IMR-90 (cell line): ENCODE measurements at regions of chr4 and their contacts with region 1.

Region 1: DNA sequence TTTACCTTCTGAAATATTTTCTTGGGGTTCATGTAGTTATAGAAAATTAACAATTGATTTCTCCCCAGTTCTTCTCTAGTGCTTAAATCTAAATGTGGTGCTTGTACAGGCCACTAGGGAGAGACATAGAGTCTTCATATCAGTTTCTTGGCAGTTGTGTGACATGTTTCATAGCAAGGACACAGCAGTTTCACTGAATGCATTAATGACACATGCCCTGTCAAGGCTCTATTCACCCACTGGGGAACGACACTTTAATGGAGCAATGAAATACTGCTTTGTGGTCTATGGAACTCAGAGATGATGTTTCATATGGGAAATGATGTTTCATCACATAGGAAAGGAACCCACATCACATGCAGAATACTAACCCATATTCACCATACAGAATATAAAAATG is 2.8 kb downstream of the VEGFC start:
- DNase-seq: peak; percentile 81
- ATAC-seq: no peak
- H3K4me3 ChIP-seq: peak overlapping the region; percentile 96; the same call in 1 of the 2 replicates
- H3K27ac ChIP-seq: no peak overlapping the region
- H3K4me1 ChIP-seq: peaks cover 25% of the 10 kb centered on the region
- H3K27me3 ChIP-seq: no peaks in the 10 kb centered on the region
- CTCF ChIP-seq: peak; percentile 62
- POLR2A ChIP-seq: no peak
- RAD21 ChIP-seq: peak; percentile 60

Region 2: DNA sequence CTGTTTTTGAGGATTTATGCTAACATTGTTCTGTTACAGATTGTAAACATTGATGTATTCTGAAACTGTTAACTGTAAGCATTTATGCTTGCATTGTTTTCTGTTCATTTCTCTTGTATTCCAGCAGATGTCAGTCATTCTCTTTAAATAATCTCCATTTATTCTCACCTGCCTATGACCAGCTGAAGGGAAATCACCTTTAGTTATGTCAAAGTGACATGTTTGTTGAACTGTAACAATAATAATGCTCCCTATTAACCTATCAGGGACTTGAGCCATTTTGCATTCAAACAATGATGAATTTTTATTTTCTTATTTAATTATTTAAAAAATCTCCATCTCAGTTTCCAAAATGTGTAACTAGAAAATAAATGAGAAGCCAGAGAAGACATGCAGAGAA is 412.2 kb before region 1 on chr4:
- CTCF ChIA-PET with region 1: interaction called, 3 read pairs
- POLR2A ChIA-PET with region 1: no interaction called
- dilution Hi-C with region 1: no loop called
- in situ Hi-C with region 1: loop called (anchors 25 kb)
- intact Hi-C with region 1: loop called (anchors 2 kb)
- DNase-seq: peak; percentile 43
- ATAC-seq: peak; percentile 53; the same call in 1 of the 2 replicates
- H3K4me3 ChIP-seq: no peak overlapping the region
- H3K27ac ChIP-seq: no peak overlapping the region
- H3K4me1 ChIP-seq: no peaks in the 10 kb centered on the region
- H3K27me3 ChIP-seq: no peaks in the 10 kb centered on the region
- CTCF ChIP-seq: peak; percentile 65
- POLR2A ChIP-seq: no peak
- RAD21 ChIP-seq: peak; percentile 82

Region 3: GRCh38 chr4:176753049-176753448 is 36.9 kb before region 1 on chr4:
- CTCF ChIA-PET with region 1: no interaction called
- POLR2A ChIA-PET with region 1: no interaction called
- dilution Hi-C with region 1: no loop called
- in situ Hi-C with region 1: no loop called
- intact Hi-C with region 1: no loop called
- DNase-seq: peak; percentile 95
- ATAC-seq: peak; percentile 87
- H3K4me3 ChIP-seq: no peak overlapping the region
- H3K27ac ChIP-seq: peak overlapping the region; percentile 31; the same call in 1 of the 2 replicates
- H3K4me1 ChIP-seq: peaks cover 16% of the 10 kb centered on the region; the same call in 1 of the 2 replicates
- H3K27me3 ChIP-seq: no peaks in the 10 kb centered on the region
- CTCF ChIP-seq: no peak
- POLR2A ChIP-seq: no peak
- RAD21 ChIP-seq: no peak

Region 4: GRCh38 chr4:176883681-176884418 is 93.9 kb after region 1 on chr4:
- CTCF ChIA-PET with region 1: no interaction called
- POLR2A ChIA-PET with region 1: no interaction called
- dilution Hi-C with region 1: no loop called
- in situ Hi-C with region 1: no loop called
- intact Hi-C with region 1: loop called (anchors 2 kb)
- DNase-seq: peak; percentile 88
- ATAC-seq: peak; percentile 78
- H3K4me3 ChIP-seq: peak overlapping the region; percentile 30; the same call in 1 of the 2 replicates
- H3K27ac ChIP-seq: peak overlapping the region; percentile 53
- H3K4me1 ChIP-seq: peaks cover 9% of the 10 kb centered on the region
- H3K27me3 ChIP-seq: no peaks in the 10 kb centered on the region
- CTCF ChIP-seq: no peak
- POLR2A ChIP-seq: no peak
- RAD21 ChIP-seq: no peak

Region 5: DNA sequence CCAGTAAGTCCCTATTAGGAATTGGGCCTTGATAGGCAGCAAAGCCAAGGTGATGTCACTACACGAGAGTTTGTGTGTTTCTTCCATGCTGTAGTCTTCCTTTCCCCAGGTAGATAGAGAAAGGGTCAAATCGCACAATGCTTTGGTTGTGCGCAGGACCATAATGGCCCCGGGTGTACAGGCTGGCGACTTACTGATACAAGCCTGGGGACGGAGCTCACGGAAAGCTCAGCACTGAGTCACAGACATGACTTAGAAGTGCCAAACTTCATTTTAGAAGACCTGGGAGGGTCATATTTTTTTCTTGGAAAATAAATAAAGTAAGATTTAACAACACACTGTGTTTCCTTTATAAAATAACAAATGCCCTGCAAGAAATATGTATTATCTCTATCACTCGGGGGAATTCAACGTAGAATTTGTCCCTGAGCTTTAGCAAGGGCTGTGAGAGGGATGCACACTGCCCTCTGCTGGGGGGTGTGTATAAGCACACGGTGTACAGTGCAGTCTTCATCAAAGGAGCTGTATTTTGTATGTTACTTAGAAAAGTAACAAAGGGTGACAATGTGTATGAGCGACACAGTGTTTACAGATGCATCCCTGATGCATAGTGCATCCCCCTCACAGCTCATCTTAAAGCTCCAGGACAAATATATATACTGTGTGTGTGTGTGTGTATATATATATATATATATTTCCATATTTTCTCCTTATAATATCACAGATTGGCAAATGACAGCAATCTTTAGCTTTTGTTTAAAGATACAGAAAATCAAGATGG is 257.3 kb after region 1 on chr4:
- CTCF ChIA-PET with region 1: interaction called, 11 read pairs
- POLR2A ChIA-PET with region 1: interaction called, 4 read pairs
- dilution Hi-C with region 1: no loop called
- in situ Hi-C with region 1: loop called (anchors 10 kb)
- intact Hi-C with region 1: loop called (anchors 1 kb)
- DNase-seq: peak; percentile 81
- ATAC-seq: peak; percentile 99
- H3K4me3 ChIP-seq: no peak overlapping the region
- H3K27ac ChIP-seq: no peak overlapping the region
- H3K4me1 ChIP-seq: no peaks in the 10 kb centered on the region
- H3K27me3 ChIP-seq: no peaks in the 10 kb centered on the region
- CTCF ChIP-seq: peak; percentile 82
- POLR2A ChIP-seq: 0 out of 2 replicates have a peak, but pooled peaks have one; percentile 25
- RAD21 ChIP-seq: peak; percentile 96

Region 6: DNA sequence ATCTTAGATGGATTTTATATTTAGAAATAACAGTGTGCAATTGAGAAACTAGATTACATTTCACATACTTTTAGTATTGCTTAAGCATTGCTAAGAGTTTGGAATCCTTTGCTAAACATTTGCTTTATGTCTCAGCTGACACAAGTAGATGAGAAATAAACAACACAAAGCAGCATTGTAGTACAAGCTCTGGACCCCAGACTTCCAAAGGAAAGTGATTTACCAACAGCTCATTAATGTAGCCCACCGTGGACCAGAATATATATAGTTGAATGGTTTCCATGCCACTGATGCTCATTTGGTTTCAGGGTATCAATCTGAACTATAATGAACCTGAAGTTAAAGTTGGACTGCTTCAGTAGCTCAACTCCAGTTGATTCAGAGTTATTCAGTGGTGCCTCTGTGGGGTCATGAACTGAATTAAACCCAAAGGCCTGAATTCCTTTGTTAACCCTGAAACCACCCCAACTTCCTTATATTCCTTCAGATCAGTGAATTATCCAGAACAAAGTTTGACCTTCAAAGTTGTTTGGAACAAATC is 387.7 kb after region 1 on chr4:
- CTCF ChIA-PET with region 1: no interaction called
- POLR2A ChIA-PET with region 1: no interaction called
- dilution Hi-C with region 1: no loop called
- in situ Hi-C with region 1: no loop called
- intact Hi-C with region 1: loop called (anchors 10 kb)
- DNase-seq: peak; percentile 89
- ATAC-seq: peak; percentile 91
- H3K4me3 ChIP-seq: no peak overlapping the region
- H3K27ac ChIP-seq: peak overlapping the region; percentile 85
- H3K4me1 ChIP-seq: peaks cover 10% of the 10 kb centered on the region
- H3K27me3 ChIP-seq: no peaks in the 10 kb centered on the region
- CTCF ChIP-seq: no peak
- POLR2A ChIP-seq: no peak
- RAD21 ChIP-seq: no peak

Region 7: DNA sequence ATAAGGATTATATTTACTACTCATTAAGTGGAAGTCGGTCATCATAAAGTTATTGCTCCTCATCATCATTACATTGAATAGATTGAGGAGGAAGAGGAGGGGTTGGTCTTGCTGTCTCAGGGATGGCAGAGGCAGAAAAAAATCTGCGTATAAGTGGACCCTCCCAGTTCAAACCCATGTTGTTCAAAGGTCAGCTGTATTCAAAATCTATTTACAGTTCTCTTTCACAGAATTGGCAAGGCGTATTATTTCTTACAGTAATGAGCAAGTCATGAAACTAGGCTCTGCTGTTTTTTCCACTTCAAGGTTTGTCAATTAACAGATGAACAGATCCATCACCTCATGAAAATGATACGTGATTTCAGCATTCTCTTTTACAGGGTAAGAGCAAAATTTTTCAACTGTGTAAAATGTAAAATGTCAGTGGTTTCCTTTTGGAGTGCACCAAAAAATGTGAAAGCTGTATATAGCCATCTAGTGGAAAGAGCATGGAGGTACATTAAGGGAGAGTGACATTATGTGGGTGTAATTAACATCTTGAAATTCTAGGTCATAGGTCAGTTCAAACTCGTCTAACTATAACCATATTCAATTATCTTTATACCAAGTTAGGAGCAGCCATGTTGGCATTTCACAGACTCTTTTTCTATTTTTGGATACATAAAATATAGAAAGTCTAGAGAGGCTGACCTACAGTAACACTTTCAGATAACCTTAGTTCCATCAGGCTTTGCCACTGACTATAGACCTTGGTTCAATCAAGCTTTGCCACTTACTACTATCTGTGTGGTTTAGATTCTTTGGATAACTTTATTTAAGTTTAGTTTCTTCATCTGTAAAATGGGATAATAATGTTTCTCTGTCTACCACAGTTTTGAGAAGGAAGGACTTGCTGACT is 549.8 kb after region 1 on chr4:
- CTCF ChIA-PET with region 1: no interaction called
- POLR2A ChIA-PET with region 1: no interaction called
- dilution Hi-C with region 1: no loop called
- in situ Hi-C with region 1: loop called (anchors 25 kb)
- intact Hi-C with region 1: loop called (anchors 10 kb)
- DNase-seq: peak; percentile 51
- ATAC-seq: peak; percentile 84
- H3K4me3 ChIP-seq: no peak overlapping the region
- H3K27ac ChIP-seq: no peak overlapping the region; the same call in 1 of the 2 replicates
- H3K4me1 ChIP-seq: peaks cover 2% of the 10 kb centered on the region; the same call in 1 of the 2 replicates
- H3K27me3 ChIP-seq: no peaks in the 10 kb centered on the region
- CTCF ChIP-seq: peak; percentile 79
- POLR2A ChIP-seq: no peak
- RAD21 ChIP-seq: peak; percentile 80